Posterior vena cava (tissue), 2 donors: ENCODE measurements at regions of chr14 and their contacts with region 1.

Region 1: GRCh38 chr14:56816574-56817391 is 6.5 kb upstream of the OTX2 start:
- DNase-seq: no peak

Region 2: GRCh38 chr14:56754981-56755401 is 61.8 kb before region 1 on chr14:
- intact Hi-C with region 1: no loop called
- DNase-seq: no peak

Region 3: GRCh38 chr14:56874375-56874774 is 57.6 kb after region 1 on chr14:
- intact Hi-C with region 1: no loop called
- DNase-seq: no peak

Region 4: DNA sequence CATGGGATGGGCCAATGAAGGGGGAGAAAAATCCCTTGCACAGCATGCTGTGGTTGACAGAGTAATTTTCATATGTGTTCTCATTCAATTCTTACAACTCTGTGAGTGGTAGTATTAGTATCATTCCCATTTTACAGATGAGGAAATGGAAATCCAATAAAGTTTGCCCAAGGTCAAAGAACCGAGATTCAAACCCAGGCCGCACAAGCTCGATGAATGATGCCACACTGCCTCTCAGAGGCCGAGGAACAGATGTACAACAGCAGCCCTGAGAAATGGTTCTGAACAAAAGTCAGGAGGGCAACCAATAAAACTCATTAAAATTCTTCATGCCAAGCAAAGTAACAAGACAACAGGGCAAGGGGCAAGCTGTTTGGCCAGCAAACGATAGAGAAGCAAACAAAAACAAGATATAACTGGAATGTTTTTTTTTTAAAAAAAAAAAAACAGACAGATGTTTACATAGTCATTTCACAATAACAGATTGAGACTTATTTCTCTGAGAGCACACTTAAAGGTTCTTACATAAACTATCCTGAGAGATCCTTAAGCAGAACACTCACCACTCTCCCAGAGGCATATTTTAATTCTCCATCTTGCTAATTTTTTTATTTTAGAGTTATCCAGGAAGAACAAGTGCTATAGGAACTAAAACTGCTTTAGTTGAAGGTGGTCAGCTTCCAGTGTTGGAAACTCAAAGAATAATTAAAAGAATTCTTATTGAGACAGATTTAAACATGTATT is 366.1 kb after region 1 on chr14:
- intact Hi-C with region 1: loop called in 1 of 2 experiments (anchors 10 kb)
- DNase-seq: no peak